RWPE1 (cell line): ENCODE measurements at regions of chr11 and their contacts with region 1.

Region 1: DNA sequence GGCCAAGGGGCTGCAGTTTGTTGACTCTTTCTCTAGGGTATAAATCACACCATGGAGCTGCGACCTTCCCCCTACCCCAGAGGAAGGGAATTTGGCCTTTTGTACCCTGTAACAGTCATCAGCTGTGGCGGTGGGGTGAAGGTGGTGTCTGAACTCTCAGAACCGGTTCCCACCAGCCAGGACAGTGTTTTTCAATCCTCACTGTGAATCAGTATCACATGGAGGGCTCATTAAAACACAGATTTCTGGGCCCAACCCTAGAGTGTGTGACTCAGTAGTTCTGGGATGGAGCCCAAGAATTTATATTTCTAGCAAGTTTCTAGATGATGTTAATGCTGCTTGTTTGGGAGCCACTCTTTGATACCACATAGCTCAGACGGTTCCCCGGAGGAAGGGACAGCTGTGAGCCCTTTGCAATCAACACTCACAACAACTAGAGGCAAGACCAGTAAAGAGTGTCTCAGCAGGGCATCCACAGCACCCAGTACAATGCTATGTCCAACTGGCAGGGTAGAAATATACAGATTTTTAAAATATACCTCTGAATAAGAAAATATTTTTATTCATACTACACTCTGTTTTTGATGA is 43.9 kb upstream of the FAT3 start:
- DNase-seq: peak; percentile 1
- H3K27ac ChIP-seq: peak overlapping the region; percentile 42; the same call in 1 of the 2 replicates
- CTCF ChIP-seq: no peak

Region 2: GRCh38 chr11:92048415-92048814 is 132.3 kb before region 1 on chr11:
- CTCF ChIA-PET with region 1: no interaction called
- POLR2A ChIA-PET with region 1: no interaction called
- DNase-seq: peak; percentile 31
- H3K27ac ChIP-seq: no peak overlapping the region
- CTCF ChIP-seq: no peak

Region 3: DNA sequence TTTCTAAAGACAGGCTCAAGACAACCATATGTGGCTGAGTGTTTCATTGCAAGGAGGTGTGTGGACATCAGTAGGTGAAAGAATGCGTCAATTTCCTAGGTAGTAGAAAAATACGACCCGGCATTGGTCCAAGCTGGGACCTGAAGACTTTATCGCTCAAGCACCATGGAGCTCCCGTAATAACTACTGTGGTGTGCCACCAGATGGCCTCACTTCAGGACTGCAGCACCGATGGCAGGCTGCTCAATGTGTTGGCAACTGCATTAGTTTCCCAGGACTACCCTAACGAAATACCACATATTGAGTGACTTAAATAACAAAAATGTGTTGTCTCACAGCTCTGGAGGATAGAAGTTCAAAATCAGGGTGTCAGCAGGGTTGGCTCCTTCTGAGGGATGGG is 28.5 kb before region 1 on chr11:
- CTCF ChIA-PET with region 1: no interaction called
- POLR2A ChIA-PET with region 1: no interaction called
- DNase-seq: no peak
- H3K27ac ChIP-seq: no peak overlapping the region
- CTCF ChIP-seq: no peak

Region 4: GRCh38 chr11:92162776-92163175 is 18.0 kb before region 1 on chr11:
- CTCF ChIA-PET with region 1: no interaction called
- POLR2A ChIA-PET with region 1: interaction called, 16 read pairs
- DNase-seq: no peak
- H3K27ac ChIP-seq: no peak overlapping the region
- CTCF ChIP-seq: no peak

Region 5: DNA sequence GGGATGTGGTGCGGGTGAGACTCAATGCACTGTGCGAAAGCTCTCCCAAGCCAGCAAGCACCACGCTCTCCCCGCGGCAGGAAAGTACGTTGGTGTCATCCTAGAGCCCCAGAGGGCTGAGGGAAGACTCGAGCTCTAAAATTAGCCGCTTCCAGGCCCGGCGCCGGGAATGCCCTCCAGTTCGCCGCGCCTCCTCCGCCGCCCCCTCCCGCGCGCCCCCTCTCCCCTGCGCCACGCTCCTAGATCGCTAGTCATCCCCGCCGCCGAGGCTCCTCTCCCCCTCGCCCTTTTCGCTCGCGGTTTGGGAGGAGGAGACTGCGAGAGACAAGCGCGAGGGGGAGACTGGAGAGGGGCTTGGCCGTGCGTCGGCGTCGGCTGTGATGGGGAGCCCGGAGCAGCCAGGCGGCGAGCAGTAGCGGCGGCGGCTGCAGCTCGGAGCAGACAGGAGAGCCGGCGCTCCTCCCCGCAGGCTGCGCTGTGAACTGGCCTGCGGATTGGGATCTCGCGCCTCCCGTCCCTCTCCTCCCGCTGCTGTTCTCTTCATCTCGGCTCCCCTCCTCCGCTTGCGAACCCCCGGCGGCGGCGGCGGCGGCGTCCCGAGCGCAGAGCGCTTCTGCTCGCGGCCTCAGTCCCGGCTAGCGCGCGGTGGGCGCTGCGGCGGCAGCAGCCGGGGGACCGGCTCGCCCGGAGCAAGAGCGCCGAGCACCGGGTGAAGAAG is 43.8 kb after region 1 on chr11 and contains the start of gene FAT3:
- CTCF ChIA-PET with region 1: no interaction called
- POLR2A ChIA-PET with region 1: no interaction called
- DNase-seq: peak; percentile 30
- H3K27ac ChIP-seq: no peak within 1 kb of the TSS
- CTCF ChIP-seq: no peak